ENCODE measurements at regions of chr11 and their contacts with region 1.

Region 1: DNA sequence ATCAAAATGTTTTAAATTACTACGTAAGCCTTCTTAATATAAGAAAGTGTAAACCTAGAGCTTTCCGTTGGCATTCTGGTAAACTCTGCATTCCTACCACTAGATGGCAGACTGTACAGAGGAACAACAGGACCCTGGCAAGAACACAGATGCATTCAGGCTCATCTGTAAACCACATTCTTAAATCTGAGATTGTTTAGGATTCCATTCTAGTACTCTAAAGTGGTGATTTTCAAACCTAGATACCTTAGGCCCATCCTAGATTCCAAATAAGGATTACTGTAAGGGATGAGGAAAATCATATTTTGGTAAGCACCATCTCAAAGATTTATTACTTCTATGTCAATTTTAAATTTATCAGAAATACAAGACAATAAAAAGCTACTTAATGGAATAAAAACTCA is 26.9 kb downstream of the PICALM start:
- DNase-seq: peak; percentile 63 to 85
- ATAC-seq: peak; percentile 85 to 90
- H3K4me3 ChIP-seq: no peak overlapping the region
- H3K27ac ChIP-seq: no peak overlapping the region
- H3K4me1 ChIP-seq: peaks cover 34% of the 10 kb centered on the region
- CTCF ChIP-seq: peak; percentile 97
- EP300 ChIP-seq: no peak
- POLR2A ChIP-seq: no peak
- RAD21 ChIP-seq: peak; percentile 84 to 85

Region 2: DNA sequence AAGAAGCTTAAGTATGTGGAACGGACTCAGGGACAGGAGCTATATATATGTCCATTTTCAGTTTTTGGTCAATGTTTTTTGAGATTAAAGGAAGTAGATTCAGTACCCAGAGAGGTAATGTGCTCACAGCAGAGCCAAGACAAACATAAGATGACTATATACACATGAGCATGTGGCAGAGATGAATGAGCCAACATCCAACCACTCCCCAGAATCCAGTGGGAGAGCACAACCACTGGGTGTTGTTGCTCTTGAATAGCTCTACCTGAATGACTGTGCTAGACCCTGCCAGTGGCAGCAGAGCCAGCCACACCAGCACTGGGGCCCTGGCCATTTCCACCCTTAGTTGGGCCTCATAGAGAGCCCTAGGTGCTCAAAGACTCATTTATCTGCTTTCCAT is 220.3 kb before region 1 on chr11:
- CTCF ChIA-PET with region 1: no interaction called
- POLR2A ChIA-PET with region 1: no interaction called
- DNase-seq: peak in 1 of 2 experiments; percentile 62
- ATAC-seq: peak; percentile 72 to 83; a peak in 5 of 6 replicates
- H3K4me3 ChIP-seq: no peak overlapping the region
- H3K27ac ChIP-seq: peak overlapping the region; percentile 48 to 64
- H3K4me1 ChIP-seq: peaks cover 34% of the 10 kb centered on the region
- CTCF ChIP-seq: no peak
- EP300 ChIP-seq: no peak
- POLR2A ChIP-seq: no peak
- RAD21 ChIP-seq: no peak

Region 3: DNA sequence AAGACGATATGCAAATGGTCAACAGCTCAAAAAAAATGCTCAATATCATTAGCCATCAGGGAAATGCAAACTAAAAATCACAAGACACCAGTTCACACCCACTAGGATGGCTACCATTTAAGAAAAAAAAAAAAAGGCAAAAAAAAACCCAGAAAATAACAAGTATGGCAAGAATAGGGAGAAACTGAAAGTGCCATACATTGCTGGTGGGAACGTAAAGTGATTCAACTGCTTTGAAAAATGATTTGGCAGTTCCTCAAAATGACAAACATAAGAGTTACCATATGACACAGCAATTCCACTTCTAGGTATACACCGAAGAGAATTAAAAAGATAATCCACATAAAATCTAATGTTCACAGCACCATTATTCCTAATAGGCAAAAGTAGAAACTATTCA is 20.6 kb before region 1 on chr11:
- CTCF ChIA-PET with region 1: interaction called, 10 read pairs
- POLR2A ChIA-PET with region 1: no interaction called
- DNase-seq: no peak
- ATAC-seq: no peak
- H3K4me3 ChIP-seq: no peak overlapping the region
- H3K27ac ChIP-seq: no peak overlapping the region
- H3K4me1 ChIP-seq: peaks cover 3% of the 10 kb centered on the region; the same call in 1 of the 3 replicates
- CTCF ChIP-seq: no peak
- EP300 ChIP-seq: no peak
- POLR2A ChIP-seq: no peak
- RAD21 ChIP-seq: no peak

Region 4: DNA sequence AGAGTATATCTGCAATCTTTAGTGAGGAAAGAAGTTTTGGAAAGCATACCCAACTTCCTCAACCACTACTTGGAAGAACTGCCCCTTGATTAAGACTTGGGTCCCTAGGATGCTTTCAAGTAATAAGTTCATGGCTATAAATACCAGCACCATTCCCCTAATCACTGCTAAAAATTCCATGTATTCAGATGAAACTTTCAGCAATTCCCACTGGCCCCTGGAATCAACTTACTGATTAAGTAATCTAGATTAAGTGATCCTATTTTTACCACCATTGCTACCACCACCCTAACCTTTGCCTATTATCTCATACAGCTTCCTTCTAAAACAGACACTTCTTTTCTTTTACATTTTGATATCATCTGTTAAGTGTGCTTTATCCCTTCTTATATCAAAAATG is 16.4 kb after region 1 on chr11:
- CTCF ChIA-PET with region 1: interaction called, 15 read pairs
- POLR2A ChIA-PET with region 1: no interaction called
- DNase-seq: no peak
- ATAC-seq: no peak
- H3K4me3 ChIP-seq: no peak overlapping the region
- H3K27ac ChIP-seq: no peak overlapping the region
- H3K4me1 ChIP-seq: peaks cover 11% of the 10 kb centered on the region
- CTCF ChIP-seq: no peak
- EP300 ChIP-seq: no peak
- POLR2A ChIP-seq: no peak
- RAD21 ChIP-seq: no peak

Region 5: DNA sequence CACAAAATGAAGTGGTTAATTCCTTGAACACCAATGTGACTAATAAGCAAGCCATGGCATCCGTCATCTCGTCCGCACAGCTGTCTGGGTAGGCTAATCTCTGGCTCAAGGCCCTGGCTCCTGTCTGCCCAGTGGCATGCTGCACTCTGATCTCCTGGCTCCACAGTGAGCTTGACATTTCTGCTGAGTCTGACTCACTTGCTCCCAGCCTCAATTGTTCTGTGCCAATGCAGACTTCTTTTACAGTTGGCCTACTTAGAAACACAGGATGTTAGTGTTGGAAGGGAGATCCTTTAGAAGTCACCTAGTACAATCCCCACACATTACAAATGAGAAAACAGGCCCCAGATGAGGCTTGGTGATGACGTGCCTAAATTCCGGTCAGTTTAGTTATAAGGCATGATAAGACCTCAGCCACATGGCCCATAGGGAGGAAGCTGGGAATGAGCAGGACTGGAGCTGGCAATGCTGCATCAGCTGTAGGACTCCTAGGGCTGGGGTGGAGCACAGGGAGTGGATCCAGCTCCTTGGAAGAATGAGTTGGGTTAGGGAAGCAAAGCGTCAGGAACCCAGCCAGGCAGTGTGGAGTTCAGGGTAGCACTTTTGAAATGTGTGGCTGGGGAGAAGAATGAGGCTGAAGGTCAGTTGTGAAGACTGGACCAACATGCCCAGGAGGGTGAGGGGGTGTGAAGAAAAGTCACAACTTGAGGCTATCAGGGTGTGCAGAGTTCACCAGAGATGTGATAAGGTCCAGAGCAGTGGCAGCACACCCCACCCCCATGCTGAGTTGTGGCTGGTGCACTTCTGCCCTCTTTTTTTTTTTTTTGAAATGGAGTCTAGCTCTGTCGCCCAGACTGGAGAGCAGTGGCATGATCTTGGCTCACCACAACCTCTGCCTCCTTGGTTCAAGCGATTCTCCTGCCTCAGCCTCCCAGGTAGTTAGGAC is 132.4 kb after region 1 on chr11:
- CTCF ChIA-PET with region 1: interaction called, 11 read pairs
- POLR2A ChIA-PET with region 1: no interaction called
- DNase-seq: peak in 1 of 2 experiments; percentile 67
- ATAC-seq: peak; percentile 82 to 86
- H3K4me3 ChIP-seq: no peak overlapping the region
- H3K27ac ChIP-seq: peak overlapping the region; percentile 49 to 86
- H3K4me1 ChIP-seq: peaks cover 37% of the 10 kb centered on the region
- CTCF ChIP-seq: no peak
- EP300 ChIP-seq: peak in 1 of 2 experiments; percentile 29; a peak in 1 of 5 replicates
- POLR2A ChIP-seq: no peak
- RAD21 ChIP-seq: no peak

Region 6: GRCh38 chr11:86202013-86202336 is 160.0 kb after region 1 on chr11:
- CTCF ChIA-PET with region 1: interaction called, 79 read pairs
- POLR2A ChIA-PET with region 1: no interaction called
- DNase-seq: no peak
- ATAC-seq: no peak
- H3K4me3 ChIP-seq: no peak overlapping the region
- H3K27ac ChIP-seq: no peak overlapping the region
- H3K4me1 ChIP-seq: no peaks in the 10 kb centered on the region
- CTCF ChIP-seq: no peak
- EP300 ChIP-seq: no peak
- POLR2A ChIP-seq: no peak
- RAD21 ChIP-seq: no peak